Posterior vena cava (tissue), 2 donors: ENCODE measurements at regions of chrX and their contacts with region 1.

Region 1: DNA sequence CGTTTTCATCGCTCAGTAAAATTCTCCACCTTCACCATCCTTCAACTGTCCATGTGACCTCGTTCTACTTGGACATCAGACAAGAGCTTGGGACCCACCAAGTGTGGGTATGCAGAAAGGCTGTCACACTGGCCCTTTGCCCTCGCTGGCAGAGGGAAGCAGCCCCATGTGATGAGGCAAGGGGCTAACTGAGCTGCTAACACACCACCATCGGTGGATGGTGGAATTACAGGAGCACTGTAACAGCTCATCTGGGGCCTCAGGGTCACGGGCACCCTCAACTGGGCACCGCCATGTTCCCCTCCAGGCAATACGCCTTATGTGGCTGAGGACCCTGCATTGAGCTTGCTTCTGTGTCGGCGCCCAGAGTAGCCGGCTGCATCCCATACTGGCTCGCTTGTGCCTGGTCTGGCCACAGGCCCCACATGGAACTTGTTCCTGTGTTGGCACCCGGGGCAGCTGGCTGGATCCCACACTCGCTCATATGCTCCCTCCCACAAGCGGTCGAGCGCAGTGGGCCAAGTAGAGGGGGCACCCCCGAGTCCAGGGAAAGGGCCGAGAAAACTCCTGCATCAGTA is 109.5 kb downstream of the TAB3 start:
- DNase-seq: peak; percentile 75

Region 2: GRCh38 chrX:30831082-30831481 is 51.5 kb after region 1 on chrX:
- intact Hi-C with region 1: no loop called
- DNase-seq: no peak

Region 3: DNA sequence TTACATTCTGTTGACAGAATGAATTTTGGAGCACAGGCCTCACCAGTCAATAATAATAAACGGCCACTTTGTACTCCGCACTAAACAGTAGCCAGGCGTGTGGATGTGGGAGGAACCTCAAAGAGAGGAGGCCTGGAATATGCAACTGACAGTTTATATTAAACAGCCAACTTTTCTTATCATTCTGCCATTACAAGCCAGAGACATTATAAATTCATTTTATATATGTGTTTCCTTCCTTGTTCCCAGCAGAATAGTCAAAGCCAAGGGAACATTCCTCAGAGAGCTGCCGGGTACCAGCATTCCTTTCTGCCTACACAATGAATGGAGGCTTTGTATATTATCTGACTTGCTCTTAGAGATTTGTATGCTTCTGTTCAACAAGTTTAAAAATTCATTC is 728.8 kb after region 1 on chrX:
- intact Hi-C with region 1: loop called in 1 of 2 experiments (anchors 10 kb)
- DNase-seq: no peak